ENCODE measurements at regions of chr6 and their contacts with region 1.

Region 1: GRCh38 chr6:163565140-163565539 is 150.6 kb downstream of the QKI start:
- DNase-seq: no peak
- ATAC-seq: peak; percentile 54 to 81 (median 78)
- H3K4me3 ChIP-seq: no peak overlapping the region
- H3K27ac ChIP-seq: peak overlapping the region; percentile 60
- H3K4me1 ChIP-seq: peaks cover 59% of the 10 kb centered on the region
- H3K27me3 ChIP-seq: no peaks in the 10 kb centered on the region
- CTCF ChIP-seq: no peak

Region 2: GRCh38 chr6:163226836-163227485 is 338.2 kb before region 1 on chr6:
- intact Hi-C with region 1: no loop called
- DNase-seq: no peak
- ATAC-seq: no peak
- H3K4me3 ChIP-seq: no peak overlapping the region
- H3K27ac ChIP-seq: no peak overlapping the region
- H3K4me1 ChIP-seq: no peaks in the 10 kb centered on the region
- H3K27me3 ChIP-seq: no peaks in the 10 kb centered on the region
- CTCF ChIP-seq: no peak

Region 3: GRCh38 chr6:163525926-163526325 is 39.2 kb before region 1 on chr6:
- intact Hi-C with region 1: no loop called
- DNase-seq: no peak
- ATAC-seq: peak in 1 of 4 donors; percentile 40
- H3K4me3 ChIP-seq: no peak overlapping the region
- H3K27ac ChIP-seq: peak overlapping the region; percentile 81
- H3K4me1 ChIP-seq: peaks cover 91% of the 10 kb centered on the region
- H3K27me3 ChIP-seq: no peaks in the 10 kb centered on the region
- CTCF ChIP-seq: no peak

Region 4: GRCh38 chr6:163547291-163547690 is 17.8 kb before region 1 on chr6:
- intact Hi-C with region 1: loop called in 1 of 2 experiments (anchors 2 kb)
- DNase-seq: no peak
- ATAC-seq: peak in 3 of 4 donors; percentile 35 to 67 (median 37)
- H3K4me3 ChIP-seq: no peak overlapping the region
- H3K27ac ChIP-seq: peak overlapping the region; percentile 37
- H3K4me1 ChIP-seq: peaks cover 60% of the 10 kb centered on the region
- H3K27me3 ChIP-seq: no peaks in the 10 kb centered on the region
- CTCF ChIP-seq: no peak

Region 5: GRCh38 chr6:163999475-164000125 is 434.5 kb after region 1 on chr6:
- intact Hi-C with region 1: no loop called
- DNase-seq: no peak
- ATAC-seq: no peak
- H3K4me3 ChIP-seq: no peak overlapping the region
- H3K27ac ChIP-seq: no peak overlapping the region
- H3K4me1 ChIP-seq: no peaks in the 10 kb centered on the region
- H3K27me3 ChIP-seq: no peaks in the 10 kb centered on the region
- CTCF ChIP-seq: no peak